ENCODE measurements at regions of chr20 and their contacts with region 1.

Region 1: GRCh38 chr20:58271606-58272402 is 37.7 kb upstream of the RAB22A start:
- DNase-seq: no peak
- H3K4me3 Mint-ChIP-seq: no peak overlapping the region
- H3K27ac Mint-ChIP-seq: peak overlapping the region; percentile 70
- H3K4me1 Mint-ChIP-seq: peaks cover 50% of the 10 kb centered on the region
- H3K27me3 Mint-ChIP-seq: no peaks in the 10 kb centered on the region

Region 2: DNA sequence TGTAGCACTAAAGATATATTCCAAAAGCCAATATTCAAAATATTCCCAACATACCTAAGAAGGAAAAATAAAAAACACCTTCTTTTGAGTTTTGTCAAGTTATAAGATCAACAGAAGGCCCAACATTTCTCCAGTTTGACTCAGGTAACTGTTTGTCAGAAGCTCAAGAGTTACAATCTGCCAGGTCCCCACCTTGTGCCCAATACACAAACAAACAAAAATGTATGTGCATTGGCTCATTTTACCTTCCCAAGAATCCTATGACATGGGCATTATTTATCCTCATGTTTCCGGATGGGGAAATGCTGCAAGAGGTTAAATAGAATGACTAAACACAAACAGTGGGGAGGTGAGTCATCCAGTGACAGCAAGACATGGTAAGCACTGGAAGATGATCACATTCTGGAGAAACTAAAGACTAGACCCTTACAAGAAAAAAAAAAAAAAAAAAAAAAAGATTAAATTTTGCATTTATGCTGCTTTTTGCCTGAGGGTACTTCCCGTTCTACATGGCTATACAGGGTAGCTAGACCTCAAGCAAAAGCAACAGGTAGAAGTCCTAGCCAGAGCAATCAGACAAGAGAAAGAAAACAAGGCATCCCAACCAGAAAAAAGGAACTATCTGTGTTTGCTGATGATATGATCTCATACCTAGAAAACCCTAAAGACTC is 19.7 kb before region 1 on chr20:
- intact Hi-C with region 1: loop called (anchors 2 kb)
- DNase-seq: no peak
- H3K4me3 Mint-ChIP-seq: no peak overlapping the region
- H3K27ac Mint-ChIP-seq: peak overlapping the region; percentile 36
- H3K4me1 Mint-ChIP-seq: peaks cover 43% of the 10 kb centered on the region
- H3K27me3 Mint-ChIP-seq: no peaks in the 10 kb centered on the region

Region 3: DNA sequence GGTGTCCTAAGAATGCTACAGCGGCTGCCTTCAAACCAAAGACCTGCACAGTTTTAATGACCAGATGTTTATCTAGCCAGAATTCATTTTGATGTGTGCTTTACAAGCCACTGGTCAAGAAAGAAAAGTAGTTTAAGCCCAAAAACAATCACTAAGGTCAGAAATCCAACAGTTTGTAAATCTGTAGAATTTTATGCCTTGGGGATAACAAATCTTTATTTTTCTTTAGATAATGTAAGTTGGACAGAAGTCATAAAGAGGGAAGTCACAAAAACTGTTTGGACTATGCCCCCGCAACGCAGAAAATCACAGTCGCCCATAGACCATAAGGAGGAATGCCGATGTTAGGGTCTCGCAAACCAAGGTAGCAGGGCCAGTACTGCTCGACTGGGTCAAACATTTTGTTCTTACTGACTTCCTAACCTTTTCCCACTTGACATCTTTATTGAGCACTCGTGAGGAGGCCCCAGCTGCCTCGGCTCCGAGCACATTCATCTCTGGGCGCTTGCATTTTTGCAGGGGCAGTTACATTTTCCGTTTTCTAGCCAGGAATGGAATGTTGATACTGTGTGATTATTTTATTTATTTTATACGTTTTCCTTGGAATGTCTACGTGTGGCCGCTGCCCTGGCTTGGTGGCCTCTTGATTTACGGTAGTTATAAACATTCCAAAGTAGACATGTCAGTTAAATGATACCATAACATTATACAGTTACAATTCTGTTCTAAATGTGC is 300.1 kb after region 1 on chr20:
- intact Hi-C with region 1: no loop called
- DNase-seq: no peak
- H3K4me3 Mint-ChIP-seq: no peak overlapping the region
- H3K27ac Mint-ChIP-seq: no peak overlapping the region
- H3K4me1 Mint-ChIP-seq: no peaks in the 10 kb centered on the region
- H3K27me3 Mint-ChIP-seq: peaks cover 7% of the 10 kb centered on the region

Measured in activated T-helper 1 cell treated with anti-CD3 and anti-CD28 coated beads, Interleukin-12 subunit alpha, Interleukin-12 subunit beta, Interleukin-2, Interleukin-4 antibody, amounts not matched to agents 30 ng/mL and 10 ng/mL and 1 ng/mL, durations not matched to agents 14 hours and 24 hours and 36 hours (primary cell).